Vagina (tissue), 2 donors: ENCODE measurements at regions of chr3 and their contacts with region 1.

Region 1: GRCh38 chr3:188947401-188948280 is 224.1 kb upstream of the TPRG1 start:
- DNase-seq: peak in 1 of 2 donors; percentile 99
- H3K4me3 ChIP-seq: peak overlapping the region; percentile 31 to 42
- H3K27ac ChIP-seq: peak overlapping the region; percentile 90
- H3K4me1 ChIP-seq: peaks cover 81% of the 10 kb centered on the region
- H3K27me3 ChIP-seq: no peaks in the 10 kb centered on the region
- CTCF ChIP-seq: peak in 1 of 3 experiments; percentile 27
- POLR2A ChIP-seq: peak in 1 of 2 donors; percentile 53

Region 2: GRCh38 chr3:187738331-187739093 is 1209.1 kb before region 1 on chr3:
- intact Hi-C with region 1: loop called (anchors 2 kb)
- DNase-seq: peak in 1 of 2 donors; percentile 97
- H3K4me3 ChIP-seq: peak overlapping the region; percentile 52 to 77
- H3K27ac ChIP-seq: peak overlapping the region; percentile 99
- H3K4me1 ChIP-seq: peaks cover 44% of the 10 kb centered on the region
- H3K27me3 ChIP-seq: no peaks in the 10 kb centered on the region
- CTCF ChIP-seq: peak; percentile 33 to 68 (median 58)
- POLR2A ChIP-seq: no peak

Region 3: GRCh38 chr3:188262913-188263683 is 684.5 kb before region 1 on chr3:
- intact Hi-C with region 1: loop called (anchors 10 kb)
- DNase-seq: no peak
- H3K4me3 ChIP-seq: no peak overlapping the region
- H3K27ac ChIP-seq: peak overlapping the region; percentile 86
- H3K4me1 ChIP-seq: peaks cover 63% of the 10 kb centered on the region
- H3K27me3 ChIP-seq: no peaks in the 10 kb centered on the region
- CTCF ChIP-seq: no peak
- POLR2A ChIP-seq: no peak

Region 4: GRCh38 chr3:188294823-188295487 is 652.7 kb before region 1 on chr3:
- intact Hi-C with region 1: loop called (anchors 10 kb)
- DNase-seq: no peak
- H3K4me3 ChIP-seq: no peak overlapping the region
- H3K27ac ChIP-seq: peak overlapping the region; percentile 66
- H3K4me1 ChIP-seq: peaks cover 51% of the 10 kb centered on the region
- H3K27me3 ChIP-seq: no peaks in the 10 kb centered on the region
- CTCF ChIP-seq: no peak
- POLR2A ChIP-seq: no peak

Region 5: GRCh38 chr3:188780193-188781147 is 167.2 kb before region 1 on chr3:
- intact Hi-C with region 1: loop called (anchors 5 kb)
- DNase-seq: peak in 1 of 2 donors; percentile 91
- H3K4me3 ChIP-seq: no peak overlapping the region
- H3K27ac ChIP-seq: peak overlapping the region; percentile 14
- H3K4me1 ChIP-seq: peaks cover 28% of the 10 kb centered on the region
- H3K27me3 ChIP-seq: no peaks in the 10 kb centered on the region
- CTCF ChIP-seq: no peak
- POLR2A ChIP-seq: no peak

Region 6: GRCh38 chr3:188863999-188864406 is 83.6 kb before region 1 on chr3:
- intact Hi-C with region 1: no loop called
- DNase-seq: no peak
- H3K4me3 ChIP-seq: no peak overlapping the region
- H3K27ac ChIP-seq: no peak overlapping the region
- H3K4me1 ChIP-seq: peaks cover 16% of the 10 kb centered on the region
- H3K27me3 ChIP-seq: no peaks in the 10 kb centered on the region
- CTCF ChIP-seq: no peak
- POLR2A ChIP-seq: no peak

Region 7: DNA sequence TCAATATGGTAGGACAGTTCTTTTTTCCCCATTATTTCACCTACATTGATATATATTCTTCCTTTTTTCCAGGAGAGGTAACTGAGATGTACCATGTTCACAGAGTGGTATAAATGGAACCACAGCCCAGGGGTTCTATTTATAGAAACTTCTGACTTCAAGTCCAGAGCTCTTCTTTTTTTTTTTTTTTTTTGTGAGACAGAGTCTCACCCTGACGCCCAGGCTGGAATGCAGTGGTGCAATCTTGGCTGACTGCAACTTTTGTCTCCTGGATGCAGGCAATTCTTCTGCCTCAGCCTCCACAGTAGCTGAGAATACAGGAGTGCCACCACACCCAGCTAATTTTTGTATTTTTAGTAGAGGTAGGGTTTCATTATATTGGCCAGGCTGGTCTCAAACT is 43.0 kb before region 1 on chr3:
- intact Hi-C with region 1: loop called (anchors 1 kb)
- DNase-seq: no peak
- H3K4me3 ChIP-seq: no peak overlapping the region
- H3K27ac ChIP-seq: no peak overlapping the region
- H3K4me1 ChIP-seq: peaks cover 23% of the 10 kb centered on the region
- H3K27me3 ChIP-seq: no peaks in the 10 kb centered on the region
- CTCF ChIP-seq: no peak
- POLR2A ChIP-seq: no peak

Region 8: GRCh38 chr3:188962253-188963247 is 14.9 kb after region 1 on chr3:
- intact Hi-C with region 1: no loop called
- DNase-seq: no peak
- H3K4me3 ChIP-seq: no peak overlapping the region
- H3K27ac ChIP-seq: peak overlapping the region; percentile 1
- H3K4me1 ChIP-seq: no peaks in the 10 kb centered on the region
- H3K27me3 ChIP-seq: no peaks in the 10 kb centered on the region
- CTCF ChIP-seq: no peak
- POLR2A ChIP-seq: no peak

Region 9: DNA sequence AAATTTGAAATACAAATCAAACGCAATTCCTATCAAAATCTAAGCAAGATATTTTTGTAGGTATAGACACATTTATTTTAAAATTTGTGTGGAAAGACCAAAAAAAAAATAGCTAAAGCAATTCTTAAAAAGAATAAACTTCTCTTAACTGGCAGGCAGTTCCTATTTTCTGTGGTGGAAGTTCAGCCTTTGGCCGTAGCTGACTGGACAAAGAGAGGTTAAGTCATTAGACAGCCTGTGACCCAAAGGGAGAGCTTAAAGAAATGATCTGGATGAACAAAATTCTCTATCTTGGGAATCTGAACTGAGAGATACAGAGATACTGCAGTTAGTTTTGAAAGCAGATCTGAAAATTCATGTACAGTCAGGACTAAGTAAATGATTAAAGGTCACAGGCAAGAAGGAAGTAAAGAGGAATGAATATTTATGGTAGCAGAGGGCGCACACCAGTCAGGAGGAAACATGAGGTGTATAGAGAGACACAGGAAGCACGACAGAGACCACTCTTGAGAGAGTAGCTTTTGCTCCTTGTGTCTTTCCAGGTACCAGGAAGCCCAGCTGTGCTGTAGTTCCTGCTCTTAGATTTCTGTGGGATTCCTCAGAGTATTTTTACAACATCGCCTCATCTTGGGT is 281.7 kb after region 1 on chr3:
- intact Hi-C with region 1: no loop called
- DNase-seq: no peak
- H3K4me3 ChIP-seq: no peak overlapping the region
- H3K27ac ChIP-seq: no peak overlapping the region
- H3K4me1 ChIP-seq: no peaks in the 10 kb centered on the region
- H3K27me3 ChIP-seq: no peaks in the 10 kb centered on the region
- CTCF ChIP-seq: no peak
- POLR2A ChIP-seq: no peak